ENCODE measurements at regions of chr1 and their contacts with region 1.

Region 1: DNA sequence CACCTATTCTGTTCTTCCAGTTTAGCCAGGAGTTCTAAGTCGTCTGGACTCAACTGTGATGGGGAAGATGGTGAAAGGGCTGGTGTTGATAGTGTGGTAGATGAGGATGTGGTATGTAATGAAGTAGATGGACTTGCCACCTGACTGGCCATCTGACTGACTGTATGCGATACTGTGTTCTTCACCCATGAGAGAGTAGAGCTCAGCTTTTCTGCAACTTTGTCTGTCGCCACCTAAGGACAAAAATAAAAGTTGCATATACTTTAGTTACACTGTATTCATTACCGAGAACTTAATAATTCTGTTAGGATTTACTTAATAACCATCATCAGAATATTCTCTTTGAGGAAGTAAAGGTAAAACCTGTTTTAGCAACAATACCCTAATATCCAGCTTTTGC is 48.5 kb downstream of the EVI5 start:
- DNase-seq: no peak
- H3K4me3 Mint-ChIP-seq: no peak overlapping the region
- H3K27ac Mint-ChIP-seq: no peak overlapping the region
- H3K4me1 Mint-ChIP-seq: no peaks in the 10 kb centered on the region
- H3K27me3 Mint-ChIP-seq: peaks cover 16% of the 10 kb centered on the region

Region 2: GRCh38 chr1:92755541-92756461 is 19.4 kb after region 1 on chr1:
- intact Hi-C with region 1: loop called (anchors 1 kb)
- DNase-seq: no peak
- H3K4me3 Mint-ChIP-seq: no peak overlapping the region
- H3K27ac Mint-ChIP-seq: no peak overlapping the region
- H3K4me1 Mint-ChIP-seq: no peaks in the 10 kb centered on the region
- H3K27me3 Mint-ChIP-seq: peaks cover 10% of the 10 kb centered on the region

Measured in activated T-helper 2 cell treated with anti-CD3 and anti-CD28 coated beads, Interferon-gamma antibody, Interleukin-2, Interleukin-4, amounts not matched to agents 10 μg/mL and 5 μg/mL and 100 μg/mL, durations not matched to agents 14 hours and 24 hours and 36 hours (primary cell).